ENCODE measurements at regions of chr4 and their contacts with region 1.

Region 1: GRCh38 chr4:171461191-171461590 is 352.0 kb upstream of the GALNTL6 start:
- DNase-seq: no peak
- ATAC-seq: no peak
- H3K4me3 ChIP-seq: no peak overlapping the region
- H3K4me3 Mint-ChIP-seq: no peak overlapping the region
- H3K27ac ChIP-seq: no peak overlapping the region
- H3K27ac Mint-ChIP-seq: no peak overlapping the region
- H3K4me1 ChIP-seq: no peaks in the 10 kb centered on the region
- H3K4me1 Mint-ChIP-seq: no peaks in the 10 kb centered on the region
- H3K27me3 ChIP-seq: no peaks in the 10 kb centered on the region
- H3K27me3 Mint-ChIP-seq: no peaks in the 10 kb centered on the region
- CTCF ChIP-seq: no peak

Region 2: DNA sequence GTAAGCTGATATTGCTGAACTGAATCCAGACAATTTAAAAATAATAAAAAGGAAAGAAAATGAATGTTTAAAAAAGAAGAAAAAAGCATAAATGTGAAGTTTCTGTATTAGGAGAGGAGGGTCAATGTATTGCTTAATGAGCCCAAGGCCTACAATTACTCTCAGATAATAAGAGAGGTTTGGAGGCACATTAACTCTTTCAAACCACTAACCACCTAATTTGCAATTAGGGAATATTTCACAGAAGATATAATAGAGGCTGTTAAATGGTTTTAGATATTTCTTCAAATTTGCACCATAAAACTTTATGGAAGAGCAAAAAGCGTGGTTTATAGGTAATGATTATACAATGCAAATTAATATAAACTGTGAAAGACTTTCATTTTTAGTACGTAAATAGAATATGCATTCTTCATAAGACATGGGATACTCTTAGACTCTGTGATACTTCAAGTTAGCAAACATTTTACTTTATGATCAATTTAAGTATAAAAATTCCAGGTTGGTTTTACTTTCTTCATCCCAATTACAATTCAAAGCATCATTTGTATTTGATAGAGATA is 12.2 kb before region 1 on chr4:
- CTCF ChIA-PET with region 1: no interaction called
- POLR2A ChIA-PET with region 1: no interaction called
- intact Hi-C with region 1: loop called in 1 of 2 experiments (anchors 1 kb)
- DNase-seq: no peak
- ATAC-seq: no peak
- H3K4me3 ChIP-seq: no peak overlapping the region
- H3K4me3 Mint-ChIP-seq: no peak overlapping the region
- H3K27ac ChIP-seq: no peak overlapping the region
- H3K27ac Mint-ChIP-seq: no peak overlapping the region
- H3K4me1 ChIP-seq: no peaks in the 10 kb centered on the region
- H3K4me1 Mint-ChIP-seq: no peaks in the 10 kb centered on the region
- H3K27me3 ChIP-seq: no peaks in the 10 kb centered on the region
- H3K27me3 Mint-ChIP-seq: no peaks in the 10 kb centered on the region
- CTCF ChIP-seq: no peak

Region 3: DNA sequence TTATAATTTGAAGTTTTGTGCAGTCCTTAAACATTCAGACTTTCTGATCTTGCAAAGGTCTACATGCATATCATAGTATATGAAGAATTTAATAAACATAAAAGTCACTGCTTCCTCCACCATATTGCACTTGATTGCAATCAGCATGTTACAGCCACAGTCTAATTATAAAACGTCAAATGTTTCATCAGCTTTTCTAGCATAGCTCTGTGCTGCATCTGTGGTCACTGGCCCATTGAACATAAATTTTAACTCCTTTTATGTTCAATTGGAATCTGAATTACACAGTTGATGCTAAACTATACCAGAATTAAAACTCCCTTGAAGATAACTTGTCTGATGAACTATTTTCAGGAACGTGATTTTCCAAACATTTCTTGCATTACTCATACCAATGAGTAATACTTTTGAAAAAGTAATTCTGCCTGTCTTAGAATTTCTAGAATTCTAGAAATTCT is 681.1 kb after region 1 on chr4:
- CTCF ChIA-PET with region 1: no interaction called
- POLR2A ChIA-PET with region 1: no interaction called
- intact Hi-C with region 1: no loop called
- DNase-seq: no peak
- ATAC-seq: no peak
- H3K4me3 ChIP-seq: no peak overlapping the region
- H3K4me3 Mint-ChIP-seq: no peak overlapping the region
- H3K27ac ChIP-seq: no peak overlapping the region
- H3K27ac Mint-ChIP-seq: no peak overlapping the region
- H3K4me1 ChIP-seq: no peaks in the 10 kb centered on the region
- H3K4me1 Mint-ChIP-seq: no peaks in the 10 kb centered on the region
- H3K27me3 ChIP-seq: no peaks in the 10 kb centered on the region
- H3K27me3 Mint-ChIP-seq: no peaks in the 10 kb centered on the region
- CTCF ChIP-seq: no peak